Activated CD4-positive, alpha-beta T cell treated with anti-CD3 and anti-CD28 coated beads for 36 hours (primary cell): ENCODE measurements at regions of chrX and their contacts with region 1.

Region 1: DNA sequence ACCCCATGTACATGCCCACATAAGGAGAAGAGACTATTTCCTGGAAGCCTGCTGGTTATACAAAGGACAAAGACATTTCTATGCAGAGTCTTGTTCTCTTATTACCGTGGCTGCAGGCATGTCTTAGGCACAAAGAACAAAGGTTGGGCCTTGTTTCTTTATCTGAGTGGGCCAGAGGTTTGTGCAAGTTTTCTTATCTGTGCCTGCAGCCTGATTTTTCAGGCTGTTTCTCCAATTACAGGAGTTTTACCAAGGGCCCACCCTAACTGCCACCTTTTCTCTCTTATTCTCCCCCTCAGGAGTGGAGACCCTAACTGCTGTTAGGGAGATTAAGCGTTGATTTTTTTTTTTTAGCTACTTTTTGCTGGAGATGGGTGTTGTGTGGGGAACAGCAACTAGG is 3.5 kb downstream of the TENT5D start:
- DNase-seq: no peak
- ATAC-seq: no peak
- H3K4me3 Mint-ChIP-seq: no peak overlapping the region
- H3K27ac Mint-ChIP-seq: no peak overlapping the region
- H3K4me1 Mint-ChIP-seq: no peaks in the 10 kb centered on the region
- H3K27me3 Mint-ChIP-seq: no peaks in the 10 kb centered on the region

Region 2: GRCh38 chrX:80486299-80486698 is 62.6 kb after region 1 on chrX:
- CTCF ChIA-PET with region 1: no interaction called
- POLR2A ChIA-PET with region 1: no interaction called
- intact Hi-C with region 1: loop called in 1 of 2 experiments (anchors 10 kb)
- DNase-seq: no peak
- ATAC-seq: no peak
- H3K4me3 Mint-ChIP-seq: no peak overlapping the region
- H3K27ac Mint-ChIP-seq: no peak overlapping the region
- H3K4me1 Mint-ChIP-seq: no peaks in the 10 kb centered on the region
- H3K27me3 Mint-ChIP-seq: no peaks in the 10 kb centered on the region

Region 3: GRCh38 chrX:81564851-81565250 is 1141.1 kb after region 1 on chrX:
- CTCF ChIA-PET with region 1: no interaction called
- POLR2A ChIA-PET with region 1: no interaction called
- intact Hi-C with region 1: no loop called
- DNase-seq: no peak
- ATAC-seq: no peak
- H3K4me3 Mint-ChIP-seq: no peak overlapping the region
- H3K27ac Mint-ChIP-seq: no peak overlapping the region
- H3K4me1 Mint-ChIP-seq: no peaks in the 10 kb centered on the region
- H3K27me3 Mint-ChIP-seq: no peaks in the 10 kb centered on the region